ENCODE measurements at regions of chr3 and their contacts with region 1.

Region 1: DNA sequence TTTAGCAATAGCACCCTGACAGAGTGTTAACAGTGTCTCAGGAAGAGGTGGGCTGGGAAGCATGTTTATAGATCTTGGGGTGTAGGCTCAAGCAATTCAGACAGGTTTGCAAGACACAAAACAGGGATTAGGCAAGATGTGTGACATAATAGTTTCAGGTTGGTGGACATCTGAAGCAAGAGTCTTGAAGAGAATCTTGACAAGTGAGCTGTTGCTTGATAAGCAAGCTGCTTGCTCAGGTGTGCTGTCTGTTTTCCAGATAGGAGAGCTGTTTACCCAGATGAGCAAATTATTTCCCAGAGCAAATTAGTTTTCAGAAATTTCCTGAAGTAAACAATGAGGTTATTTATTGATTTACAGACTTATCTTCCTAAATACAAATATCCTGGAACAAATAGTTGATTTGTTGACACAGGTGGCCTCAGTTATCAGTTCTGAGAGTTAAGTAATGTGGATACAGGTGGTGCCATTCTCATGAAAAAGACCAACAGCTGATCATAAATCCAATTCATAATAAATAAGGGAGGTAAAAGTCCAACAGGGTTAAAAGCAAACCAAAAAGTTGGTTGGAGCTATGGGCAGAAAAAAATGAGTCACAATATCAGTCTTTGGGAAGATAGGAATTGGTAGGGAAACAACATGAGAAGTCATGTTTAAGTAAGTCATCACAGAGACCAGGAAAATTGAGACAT is 437.3 kb downstream of the TBL1XR1 start:
- DNase-seq: peak; percentile 71 to 73
- H3K4me3 ChIP-seq: no peak overlapping the region
- H3K4me3 Mint-ChIP-seq: no peak overlapping the region
- H3K27ac Mint-ChIP-seq: no peak overlapping the region
- H3K4me1 ChIP-seq: peaks cover 17% of the 10 kb centered on the region
- H3K4me1 Mint-ChIP-seq: no peaks in the 10 kb centered on the region
- H3K27me3 ChIP-seq: no peaks in the 10 kb centered on the region
- H3K27me3 Mint-ChIP-seq: no peaks in the 10 kb centered on the region
- CTCF ChIP-seq: no peak

Region 2: GRCh38 chr3:176739159-176739558 is 20.8 kb before region 1 on chr3:
- CTCF ChIA-PET with region 1: no interaction called
- POLR2A ChIA-PET with region 1: interaction called, 3 read pairs
- intact Hi-C with region 1: loop called (anchors 1 kb)
- DNase-seq: peak; percentile 32 to 34
- H3K4me3 ChIP-seq: no peak overlapping the region
- H3K4me3 Mint-ChIP-seq: no peak overlapping the region
- H3K27ac Mint-ChIP-seq: no peak overlapping the region
- H3K4me1 ChIP-seq: peaks cover 30% of the 10 kb centered on the region
- H3K4me1 Mint-ChIP-seq: peaks cover 16% of the 10 kb centered on the region
- H3K27me3 ChIP-seq: no peaks in the 10 kb centered on the region
- H3K27me3 Mint-ChIP-seq: no peaks in the 10 kb centered on the region
- CTCF ChIP-seq: no peak

Region 3: DNA sequence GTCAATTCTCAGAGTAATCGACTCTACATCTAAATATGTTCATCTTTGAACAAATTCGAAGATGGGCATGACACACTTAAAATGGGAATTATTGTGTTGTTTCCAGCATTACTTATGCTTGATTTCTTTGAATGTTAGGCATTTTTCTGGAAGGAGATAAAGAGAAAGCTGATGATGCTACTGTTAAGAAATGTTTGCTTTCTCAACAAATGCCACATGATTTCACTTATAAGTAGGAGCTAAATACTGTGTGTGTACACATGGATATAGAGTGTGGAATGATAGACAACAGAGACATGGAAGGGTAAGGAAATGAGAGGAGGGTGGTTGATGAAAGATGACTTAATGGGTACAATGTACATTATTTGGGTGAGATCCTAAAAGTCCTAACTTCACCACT is 36.4 kb after region 1 on chr3:
- CTCF ChIA-PET with region 1: no interaction called
- POLR2A ChIA-PET with region 1: no interaction called
- intact Hi-C with region 1: loop called (anchors 1 kb)
- DNase-seq: no peak
- H3K4me3 ChIP-seq: no peak overlapping the region
- H3K4me3 Mint-ChIP-seq: no peak overlapping the region
- H3K27ac Mint-ChIP-seq: peak overlapping the region; percentile 8
- H3K4me1 ChIP-seq: peaks cover 20% of the 10 kb centered on the region
- H3K4me1 Mint-ChIP-seq: peaks cover 24% of the 10 kb centered on the region
- H3K27me3 ChIP-seq: no peaks in the 10 kb centered on the region
- H3K27me3 Mint-ChIP-seq: no peaks in the 10 kb centered on the region
- CTCF ChIP-seq: no peak

Region 4: GRCh38 chr3:176855956-176856355 is 96.0 kb after region 1 on chr3:
- CTCF ChIA-PET with region 1: no interaction called
- POLR2A ChIA-PET with region 1: no interaction called
- intact Hi-C with region 1: loop called (anchors 1 kb)
- DNase-seq: peak; percentile 50 to 66
- H3K4me3 ChIP-seq: no peak overlapping the region
- H3K4me3 Mint-ChIP-seq: no peak overlapping the region
- H3K27ac Mint-ChIP-seq: no peak overlapping the region
- H3K4me1 ChIP-seq: 0 out of 2 replicates have a peak, but pooled peaks cover 5% of the 10 kb centered on the region
- H3K4me1 Mint-ChIP-seq: peaks cover 12% of the 10 kb centered on the region
- H3K27me3 ChIP-seq: no peaks in the 10 kb centered on the region
- H3K27me3 Mint-ChIP-seq: peaks cover 7% of the 10 kb centered on the region
- CTCF ChIP-seq: no peak